ENCODE measurements at regions of chr15 and their contacts with region 1.

Region 1: DNA sequence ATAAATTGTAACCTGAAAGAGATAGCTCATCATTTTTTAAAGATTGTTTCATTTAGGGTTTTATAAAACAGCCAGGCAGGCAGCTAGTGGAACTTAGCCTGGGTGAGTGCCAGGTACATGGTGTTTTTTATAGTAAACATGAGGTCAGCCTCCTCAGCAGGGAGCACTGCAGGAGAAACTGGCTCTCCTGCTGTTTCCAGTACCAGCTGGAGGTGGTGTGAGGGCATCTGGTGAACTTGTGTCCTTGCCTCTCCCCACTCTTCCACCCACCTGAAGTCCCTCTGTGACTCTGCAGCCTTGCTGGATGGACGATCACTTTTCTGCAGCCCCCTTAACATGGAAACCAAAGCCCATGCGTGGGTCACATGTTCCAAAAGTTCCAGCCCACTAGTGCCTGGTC is 128.4 kb downstream of the FAM174B start:
- DNase-seq: peak; percentile 52 to 59
- ATAC-seq: peak; percentile 89 to 91
- H3K4me3 ChIP-seq: no peak overlapping the region
- H3K27ac ChIP-seq: peak overlapping the region in 2 of 4 donors; percentile 41 to 59
- H3K4me1 ChIP-seq: peaks cover 14 to 31% of the 10 kb centered on the region in 2 donors
- H3K27me3 ChIP-seq: no peaks in the 10 kb centered on the region
- CTCF ChIP-seq: no peak
- POLR2A ChIP-seq: no peak

Region 2: GRCh38 chr15:92586383-92586942 is 59.3 kb after region 1 on chr15:
- in situ Hi-C with region 1: no loop called
- intact Hi-C with region 1: no loop called
- DNase-seq: no peak
- ATAC-seq: no peak
- H3K4me3 ChIP-seq: no peak overlapping the region
- H3K27ac ChIP-seq: no peak overlapping the region
- H3K4me1 ChIP-seq: no peaks in the 10 kb centered on the region
- H3K27me3 ChIP-seq: no peaks in the 10 kb centered on the region
- CTCF ChIP-seq: no peak
- POLR2A ChIP-seq: no peak

Region 3: DNA sequence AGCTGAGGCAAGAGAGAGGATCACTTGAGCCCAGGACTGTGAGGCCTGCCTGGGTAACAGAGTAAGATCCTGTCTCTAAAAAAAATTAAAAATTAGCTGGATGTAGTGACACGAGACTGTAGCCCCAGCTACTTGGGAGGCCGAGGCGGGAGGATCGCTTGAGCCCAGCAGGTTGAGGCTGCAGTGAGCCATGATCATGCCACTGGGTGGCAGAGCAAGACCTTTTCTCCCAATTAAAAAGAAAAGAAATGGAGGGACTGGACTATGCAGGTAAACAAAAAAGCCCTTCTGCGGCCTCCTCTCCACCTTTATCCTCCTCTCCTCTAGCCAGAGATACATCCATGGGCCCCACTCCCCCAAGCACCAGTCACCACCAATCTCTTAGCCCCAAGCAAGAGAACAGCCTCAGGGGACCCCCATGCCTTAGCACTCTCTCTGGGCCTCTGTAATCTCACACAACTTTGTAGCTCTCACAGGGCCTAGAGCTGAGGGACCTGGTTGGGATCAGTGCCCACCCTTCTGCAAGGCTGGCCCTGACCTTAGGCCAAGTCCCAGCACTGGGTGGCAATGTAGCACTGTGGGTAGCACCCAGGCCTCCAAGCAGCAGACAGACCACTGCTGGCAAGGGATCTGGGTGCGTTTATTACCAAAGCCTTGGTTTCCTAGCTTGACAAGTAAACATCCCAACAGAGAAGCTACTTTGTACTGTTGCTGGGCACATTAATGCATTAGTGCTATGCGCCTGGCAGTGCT is 85.0 kb after region 1 on chr15:
- in situ Hi-C with region 1: loop called in 1 of 4 experiments (anchors 10 kb)
- intact Hi-C with region 1: loop called (anchors 5 kb)
- DNase-seq: no peak
- ATAC-seq: no peak
- H3K4me3 ChIP-seq: no peak overlapping the region
- H3K27ac ChIP-seq: no peak overlapping the region
- H3K4me1 ChIP-seq: peaks cover 10 to 11% of the 10 kb centered on the region in 2 donors
- H3K27me3 ChIP-seq: no peaks in the 10 kb centered on the region
- CTCF ChIP-seq: peak in 2 of 5 experiments; percentile 13 to 26
- POLR2A ChIP-seq: no peak

Measured in gastrocnemius medialis (tissue), 4 donors.